GM13976 (cell line): ENCODE measurements at regions of chr18 and their contacts with region 1.

Region 1: DNA sequence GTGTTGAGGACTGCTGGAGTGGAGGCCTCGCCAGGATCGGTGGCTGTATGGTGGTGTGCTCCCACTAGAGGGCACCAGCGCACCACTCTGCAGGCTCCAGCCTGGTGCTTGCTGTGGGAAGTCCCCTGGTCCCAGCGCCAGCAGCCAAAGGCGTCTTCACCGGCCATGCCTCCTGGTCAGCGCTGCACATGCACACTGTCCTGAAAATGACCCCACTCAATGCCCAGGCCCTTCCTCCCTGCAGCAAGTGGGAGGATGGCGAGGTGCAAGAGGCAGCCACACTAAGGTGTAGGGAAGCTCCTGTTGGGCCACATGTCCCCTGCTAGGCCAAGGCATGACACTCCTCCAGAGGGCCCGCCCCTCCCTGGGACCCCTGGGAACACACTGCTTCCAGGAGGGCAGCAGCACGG is 136.5 kb downstream of the CTIF start:
- DNase-seq: peak; percentile 92
- CTCF ChIP-seq: peak; percentile 90

Region 2: DNA sequence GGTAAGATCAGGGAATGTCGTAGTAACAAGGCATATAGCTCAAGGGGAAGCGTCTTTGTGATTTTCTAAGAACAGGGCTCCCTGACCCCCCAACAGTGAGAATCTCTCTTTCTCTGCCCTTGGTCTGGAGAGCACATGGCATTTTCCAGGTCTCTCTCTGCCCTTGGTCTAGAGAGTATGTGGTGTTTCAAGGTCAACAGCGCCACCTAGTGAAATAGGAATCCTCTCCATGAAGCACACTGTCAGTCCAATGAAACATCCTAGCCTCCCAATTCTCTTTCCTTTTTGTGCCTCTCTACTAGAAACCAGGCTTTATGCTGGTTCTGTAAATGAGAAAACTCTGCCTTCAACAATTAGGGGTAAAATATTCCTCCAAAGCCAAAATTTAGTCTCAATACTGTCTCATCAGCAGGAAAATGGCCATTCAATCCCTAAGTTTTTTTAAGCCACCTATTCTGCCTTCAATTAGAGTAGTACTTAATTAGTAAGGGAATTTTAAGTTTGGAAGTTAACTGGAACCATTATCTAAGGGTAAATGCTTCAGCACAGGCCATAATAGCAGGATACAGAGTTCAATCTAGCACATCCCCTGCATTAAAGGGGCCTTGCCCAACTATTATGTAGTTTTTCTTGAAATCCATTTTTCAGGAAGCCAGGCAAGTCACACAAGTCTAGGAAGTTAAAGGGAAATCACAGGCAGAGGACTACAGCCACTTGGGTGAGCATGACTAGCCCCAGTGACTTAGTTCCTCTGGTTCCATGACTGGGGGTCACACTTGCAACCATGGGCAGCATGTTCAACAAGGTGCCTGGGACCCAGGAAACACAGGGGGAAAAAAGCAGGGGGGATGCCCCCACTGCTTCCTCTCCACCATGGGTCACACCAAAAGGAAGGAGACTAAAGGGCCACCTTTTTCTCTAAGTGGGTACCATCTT is 772.7 kb after region 1 on chr18:
- in situ Hi-C with region 1: loop called (anchors 25 kb)
- DNase-seq: peak; percentile 32
- CTCF ChIP-seq: no peak

Region 3: DNA sequence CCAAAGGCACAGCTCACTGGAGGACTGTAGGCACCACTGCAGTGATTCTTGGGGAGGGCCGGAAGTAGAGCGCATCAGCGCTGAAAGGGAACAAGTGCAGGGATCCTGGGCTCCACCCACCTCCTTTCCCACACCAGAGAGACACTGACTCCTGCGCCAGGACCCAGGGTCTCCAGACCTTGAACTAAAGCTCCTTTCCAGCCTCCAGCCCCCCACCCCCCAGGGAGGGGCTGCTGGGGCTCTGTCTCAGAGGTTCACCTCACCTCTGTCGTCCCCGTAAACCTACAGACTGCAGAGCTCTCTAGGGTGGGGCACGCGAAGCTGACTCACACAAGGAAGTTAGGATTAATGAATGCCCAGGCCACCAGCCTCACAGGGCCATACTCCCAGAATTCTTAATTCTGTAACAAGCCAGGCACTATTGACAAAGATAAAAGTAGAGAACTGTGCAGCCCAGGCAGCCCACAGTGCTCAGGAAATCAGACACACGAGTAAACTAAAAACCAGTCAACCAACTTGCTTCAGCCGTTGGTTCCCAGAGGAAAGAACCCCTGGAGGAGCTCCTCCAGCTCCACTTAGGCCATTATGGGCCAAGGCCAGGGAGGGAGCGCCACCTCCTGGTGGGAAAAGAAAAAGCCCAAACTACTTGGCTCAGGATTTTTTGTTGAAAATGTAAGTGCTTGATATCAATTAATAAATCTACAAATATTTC is 1183.1 kb after region 1 on chr18:
- in situ Hi-C with region 1: loop called (anchors 25 kb)
- DNase-seq: peak; percentile 73
- CTCF ChIP-seq: peak; percentile 81